HEK293 (cell line): ENCODE measurements at regions of chr19 and their contacts with region 1.

Region 1: DNA sequence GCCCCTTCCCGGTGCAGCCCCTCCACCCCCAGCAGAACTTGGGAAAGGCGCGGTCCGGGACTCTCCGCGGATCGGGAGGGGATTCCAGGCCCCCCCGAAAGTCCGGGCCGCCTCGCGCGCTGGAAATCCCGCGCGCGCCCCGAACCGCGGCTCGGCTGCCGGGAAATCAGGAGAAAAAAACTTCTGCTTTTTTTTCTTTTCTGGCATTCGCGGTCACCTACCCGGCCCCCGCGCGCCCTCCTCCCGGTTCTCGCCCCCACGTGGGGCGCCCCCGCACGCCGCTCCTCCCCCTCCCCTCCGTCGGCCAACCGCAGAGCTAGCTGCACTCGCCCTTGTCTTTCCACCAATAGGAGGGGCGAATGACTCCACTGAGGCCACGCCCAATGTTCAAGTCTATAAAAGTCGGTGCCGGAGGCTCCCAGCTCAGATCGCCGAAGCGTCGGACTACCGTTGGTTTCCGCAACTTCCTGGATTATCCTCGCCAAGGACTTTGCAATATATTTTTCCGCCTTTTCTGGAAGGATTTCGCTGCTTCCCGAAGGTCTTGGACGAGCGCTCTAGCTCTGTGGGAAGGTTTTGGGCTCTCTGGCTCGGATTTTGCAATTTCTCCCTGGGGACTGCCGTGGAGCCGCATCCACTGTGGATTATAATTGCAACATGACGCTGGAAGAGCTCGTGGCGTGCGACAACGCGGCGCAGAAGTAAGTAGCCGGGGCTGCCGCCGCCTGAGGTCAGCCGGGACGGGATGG is at the start of gene GADD45B:
- H3K4me3 ChIP-seq: peak within 1 kb of the TSS; percentile 95
- H3K27ac ChIP-seq: peak within 1 kb of the TSS; percentile 68
- H3K4me1 ChIP-seq: peaks cover 15% of the 10 kb centered on the region
- CTCF ChIP-seq: no peak

Region 2: GRCh38 chr19:2186071-2186846 is 289.6 kb before region 1 on chr19:
- CTCF ChIA-PET with region 1: no interaction called
- POLR2A ChIA-PET with region 1: no interaction called
- H3K4me3 ChIP-seq: no peak overlapping the region
- H3K27ac ChIP-seq: no peak overlapping the region
- H3K4me1 ChIP-seq: no peaks in the 10 kb centered on the region
- CTCF ChIP-seq: no peak

Region 3: DNA sequence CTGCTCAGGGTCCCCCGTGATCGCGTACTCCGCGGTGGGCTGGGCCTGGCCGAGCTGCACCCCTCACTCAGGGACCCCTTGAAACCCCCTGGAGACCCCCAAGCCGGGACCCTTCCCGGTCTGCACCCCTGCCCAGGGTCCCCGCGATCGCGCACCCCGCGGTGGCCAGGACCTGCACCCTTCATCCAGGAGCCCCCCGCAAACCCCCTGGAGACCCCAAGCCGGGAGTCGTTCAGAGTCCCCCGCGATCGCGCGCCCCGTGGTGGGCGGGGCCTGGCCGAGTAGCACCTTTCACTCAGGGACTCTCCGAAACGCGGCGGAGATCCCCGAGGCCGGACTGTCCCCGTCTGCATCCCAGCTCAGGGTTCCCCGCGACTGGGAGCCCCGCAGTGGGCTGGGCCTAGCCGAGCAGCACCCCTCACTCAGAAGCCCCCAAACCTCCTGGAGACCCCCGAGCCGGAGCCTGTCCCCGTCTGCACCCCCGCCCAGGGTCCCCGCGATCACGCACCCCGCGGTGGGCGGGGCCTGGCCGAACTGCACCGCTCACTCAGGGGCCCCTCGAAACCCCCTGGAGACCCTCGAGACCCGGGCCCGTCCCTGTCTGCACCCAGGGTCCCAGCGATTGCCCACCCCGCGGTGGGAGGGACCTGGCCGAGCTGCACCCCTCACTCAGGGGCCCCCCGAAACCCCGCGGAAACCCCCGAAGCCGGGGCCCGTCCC is 19.9 kb before region 1 on chr19:
- CTCF ChIA-PET with region 1: interaction called, 5 read pairs
- POLR2A ChIA-PET with region 1: interaction called, 83 read pairs
- H3K4me3 ChIP-seq: peak overlapping the region; percentile 95
- H3K27ac ChIP-seq: peak overlapping the region; percentile 96
- H3K4me1 ChIP-seq: peaks cover 2% of the 10 kb centered on the region; the same call in 1 of the 2 replicates
- CTCF ChIP-seq: no peak

Region 4: DNA sequence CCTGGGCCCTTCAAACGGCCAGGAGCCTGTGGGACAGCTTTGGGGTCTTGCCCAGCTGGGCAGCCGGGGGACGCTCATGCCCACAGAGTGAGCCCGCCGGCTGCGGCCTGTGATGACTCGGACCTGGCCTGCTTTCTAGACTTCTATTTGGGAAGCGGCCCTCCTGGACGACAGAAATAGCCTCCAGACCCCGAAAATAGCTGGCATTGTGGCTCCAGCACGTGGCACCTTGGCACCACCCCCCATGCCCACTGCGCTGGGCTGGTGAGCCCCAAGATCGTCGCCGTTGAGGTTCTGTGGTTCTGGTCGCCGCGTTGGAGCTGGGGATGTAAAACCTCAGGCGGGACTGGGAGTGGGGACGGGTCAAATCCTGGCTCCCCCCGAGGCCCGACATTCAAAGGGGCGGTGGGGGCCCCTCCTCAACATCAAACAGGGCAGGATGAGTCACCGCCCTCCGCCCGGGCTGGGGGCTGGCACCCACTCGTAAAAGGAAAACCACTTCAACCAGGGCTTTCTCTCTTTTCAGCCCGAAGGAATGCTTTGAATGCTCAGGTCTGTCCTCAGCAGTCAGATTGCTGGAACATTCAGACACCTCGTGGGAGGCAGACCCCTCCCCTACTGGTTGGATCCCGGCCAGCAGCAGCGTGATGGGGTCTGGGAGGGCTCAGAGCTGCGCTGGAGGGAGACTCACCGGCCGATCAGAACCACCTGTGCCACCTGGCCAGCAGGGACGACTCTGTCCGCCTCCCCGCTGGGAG is 42.2 kb after region 1 on chr19:
- CTCF ChIA-PET with region 1: interaction called, 3 read pairs
- POLR2A ChIA-PET with region 1: interaction called, 55 read pairs
- H3K4me3 ChIP-seq: no peak overlapping the region
- H3K27ac ChIP-seq: no peak overlapping the region
- H3K4me1 ChIP-seq: no peaks in the 10 kb centered on the region
- CTCF ChIP-seq: no peak

Region 5: GRCh38 chr19:2552859-2553258 is 77.0 kb after region 1 on chr19:
- CTCF ChIA-PET with region 1: no interaction called
- POLR2A ChIA-PET with region 1: interaction called, 51 read pairs
- H3K4me3 ChIP-seq: no peak overlapping the region
- H3K27ac ChIP-seq: no peak overlapping the region
- H3K4me1 ChIP-seq: no peaks in the 10 kb centered on the region
- CTCF ChIP-seq: no peak

Region 6: DNA sequence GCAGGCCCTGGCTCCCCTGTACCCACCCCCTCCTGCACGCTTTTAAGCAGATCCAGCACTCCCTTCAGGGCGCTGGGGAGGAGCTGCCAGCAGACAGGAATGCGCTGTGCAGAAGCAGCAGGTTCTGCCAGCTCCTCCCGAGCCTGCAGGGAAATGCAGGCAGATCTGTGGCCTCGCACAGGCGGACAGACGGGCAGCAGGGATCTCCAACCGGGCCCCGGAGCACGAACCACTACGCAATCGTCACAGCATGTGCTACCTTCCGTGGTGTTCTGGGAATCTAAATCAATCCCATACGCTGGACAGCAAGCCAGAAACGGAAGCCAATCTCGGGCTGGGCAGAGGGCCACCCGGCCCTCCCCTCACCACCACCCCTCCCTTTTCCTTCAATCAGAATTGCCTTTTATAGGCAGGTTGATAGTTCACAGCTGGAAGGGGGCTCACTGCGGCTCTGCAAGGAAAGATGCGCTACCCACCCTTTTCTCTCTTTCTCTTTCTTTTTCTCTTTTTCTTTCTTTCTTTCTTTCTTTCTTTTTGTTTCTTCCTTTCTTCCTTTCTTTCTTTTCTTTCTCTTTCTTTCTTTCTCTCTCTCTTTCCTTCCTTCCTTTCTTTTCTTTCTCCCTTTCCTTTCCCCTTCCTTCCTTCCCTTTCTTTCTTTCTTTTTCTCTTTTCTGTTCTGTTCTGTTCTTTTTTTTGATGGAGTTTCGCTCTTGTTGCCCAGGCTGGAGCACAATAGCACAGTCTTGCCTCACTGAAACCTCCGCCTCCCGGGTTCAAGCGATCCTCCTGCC is 126.7 kb after region 1 on chr19:
- CTCF ChIA-PET with region 1: interaction called, 3 read pairs
- POLR2A ChIA-PET with region 1: interaction called, 251 read pairs
- H3K4me3 ChIP-seq: no peak overlapping the region
- H3K27ac ChIP-seq: no peak overlapping the region
- H3K4me1 ChIP-seq: no peaks in the 10 kb centered on the region
- CTCF ChIP-seq: no peak

Region 7: GRCh38 chr19:2636897-2637683 is 161.2 kb after region 1 on chr19:
- CTCF ChIA-PET with region 1: interaction called, 10 read pairs
- POLR2A ChIA-PET with region 1: interaction called, 26 read pairs
- H3K4me3 ChIP-seq: no peak overlapping the region
- H3K27ac ChIP-seq: no peak overlapping the region
- H3K4me1 ChIP-seq: no peaks in the 10 kb centered on the region
- CTCF ChIP-seq: peak; percentile 95

Region 8: GRCh38 chr19:2680808-2681207 is 204.9 kb after region 1 on chr19:
- CTCF ChIA-PET with region 1: no interaction called
- POLR2A ChIA-PET with region 1: no interaction called
- H3K4me3 ChIP-seq: no peak overlapping the region
- H3K27ac ChIP-seq: no peak overlapping the region
- H3K4me1 ChIP-seq: no peaks in the 10 kb centered on the region
- CTCF ChIP-seq: no peak